T-cell (primary cell): ENCODE measurements at regions of chr7 and their contacts with region 1.

Region 1: GRCh38 chr7:66920769-66921395 is at the start of gene TMEM248:
- DNase-seq: peak; percentile 83 to 95 (median 90)
- ATAC-seq: peak; percentile 88 to 94 (median 92)
- H3K4me3 ChIP-seq: peak within 1 kb of the TSS; percentile 76 to 86
- H3K4me3 Mint-ChIP-seq: peak within 1 kb of the TSS; percentile 88 to 98 (median 96)
- H3K27ac ChIP-seq: peak within 1 kb of the TSS; percentile 68
- H3K27ac Mint-ChIP-seq: peak within 1 kb of the TSS; percentile 94 to 97
- H3K4me1 ChIP-seq: peaks cover 12 to 43% of the 10 kb centered on the region in 2 experiments
- H3K4me1 Mint-ChIP-seq: peaks cover 35 to 40% (median 38%) of the 10 kb centered on the region in 3 donors
- H3K27me3 ChIP-seq: no peaks in the 10 kb centered on the region
- H3K27me3 Mint-ChIP-seq: no peaks in the 10 kb centered on the region
- total RNA-seq, gene TMEM248: 79.0 to 97.6 (median 91.9) TPM

Region 2: GRCh38 chr7:66844552-66845378 is 76.1 kb before region 1 on chr7:
- CTCF ChIA-PET with region 1: interaction called in 1 of 2 experiments, 6 read pairs
- POLR2A ChIA-PET with region 1: interaction called in 1 of 2 experiments, 10 read pairs
- DNase-seq: peak; percentile 92 to 100 (median 98)
- ATAC-seq: peak; percentile 89 to 92 (median 90)
- H3K4me3 ChIP-seq: peak overlapping the region; percentile 89 to 92
- H3K4me3 Mint-ChIP-seq: peak overlapping the region; percentile 91 to 98 (median 96)
- H3K27ac ChIP-seq: peak overlapping the region; percentile 99
- H3K27ac Mint-ChIP-seq: peak overlapping the region; percentile 98 to 100
- H3K4me1 ChIP-seq: peaks cover 9 to 22% of the 10 kb centered on the region in 2 experiments
- H3K4me1 Mint-ChIP-seq: peaks cover 20 to 31% (median 27%) of the 10 kb centered on the region in 3 donors
- H3K27me3 ChIP-seq: no peaks in the 10 kb centered on the region
- H3K27me3 Mint-ChIP-seq: no peaks in the 10 kb centered on the region